GM12878 (cell line): ENCODE measurements at regions of chr15 and their contacts with region 1.

Region 1: DNA sequence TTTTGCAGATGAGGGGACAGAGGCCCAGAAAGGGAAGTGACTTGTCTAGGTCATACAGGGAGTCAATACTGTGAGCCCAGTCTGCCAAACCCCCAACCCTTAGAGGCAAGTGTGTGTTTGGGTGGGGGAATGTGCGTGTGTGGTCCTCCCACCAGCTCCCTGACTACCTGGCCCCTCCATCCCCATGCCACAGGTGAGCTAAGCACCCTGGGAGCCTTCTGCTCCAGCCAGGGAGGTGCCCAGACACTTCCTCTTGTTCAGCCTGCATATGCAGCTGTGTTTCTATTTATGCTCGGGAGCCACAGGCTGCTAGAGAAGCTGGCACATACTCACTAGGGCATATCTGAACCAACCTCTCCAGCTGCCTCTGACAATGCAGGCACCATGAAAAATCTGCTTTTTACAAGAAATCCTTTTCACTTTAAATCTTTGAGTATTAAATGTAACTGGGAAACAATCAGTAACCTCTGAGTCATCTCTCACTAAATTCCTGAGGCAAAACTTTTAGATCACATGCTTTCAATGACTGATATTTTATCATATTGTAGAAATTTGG is 20.7 kb downstream of the TBC1D2B start:
- DNase-seq: no peak
- ATAC-seq: peak; percentile 78
- H3K4me3 ChIP-seq: no peak overlapping the region
- H3K27ac ChIP-seq: peak overlapping the region; percentile 57
- H3K4me1 ChIP-seq: peaks cover 63% of the 10 kb centered on the region
- H3K27me3 ChIP-seq: no peaks in the 10 kb centered on the region
- CTCF ChIP-seq: no peak
- EP300 ChIP-seq: no peak
- POLR2A ChIP-seq: no peak
- RAD21 ChIP-seq: no peak

Region 2: DNA sequence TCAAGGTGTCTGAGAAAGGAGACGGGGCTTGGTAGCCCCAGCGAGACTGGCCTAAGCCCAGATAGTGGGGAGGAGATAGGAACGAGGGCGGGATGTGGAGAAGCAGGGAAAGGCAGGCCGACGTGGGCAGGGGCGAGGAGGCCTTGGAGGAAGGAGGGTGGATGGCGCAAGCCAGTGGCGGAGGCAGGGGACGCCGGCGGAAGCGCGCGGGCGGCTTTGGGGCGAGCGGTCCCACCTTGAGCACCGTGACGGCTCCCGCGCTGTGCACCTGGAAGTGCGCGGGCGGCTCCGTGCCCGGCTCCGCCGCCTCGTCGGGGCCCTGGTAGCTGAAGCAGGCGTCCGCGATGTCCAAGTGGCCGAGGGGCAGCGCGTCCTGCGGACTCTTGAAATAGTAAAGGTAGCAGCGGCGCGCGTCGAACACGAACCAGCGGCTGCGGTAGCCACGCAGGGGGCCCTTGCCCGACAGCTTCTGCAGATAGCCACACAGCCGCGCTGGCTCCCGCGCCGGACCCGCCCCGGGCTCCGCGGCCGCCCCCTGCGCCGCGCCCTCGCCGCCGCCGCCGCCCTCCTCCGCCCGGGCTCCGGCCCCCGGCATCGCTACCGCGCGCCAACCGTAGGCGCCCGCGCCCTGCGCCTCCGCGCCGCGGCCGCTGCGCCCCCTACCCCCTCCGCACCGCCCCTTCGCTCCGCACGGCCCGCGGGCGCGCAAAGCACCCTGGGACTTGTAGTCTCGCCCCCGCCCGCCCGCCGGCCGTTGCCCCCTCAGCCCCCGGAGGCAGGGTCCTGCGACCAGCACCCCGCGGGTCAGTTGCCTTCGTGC is 20.5 kb after region 1 on chr15 and contains the start of gene TBC1D2B:
- CTCF ChIA-PET with region 1: interaction called, 158 read pairs
- POLR2A ChIA-PET with region 1: interaction called, 9 read pairs
- RAD21 ChIA-PET with region 1: interaction called, 170 read pairs
- SMC1A ChIA-PET with region 1: interaction called, 305 read pairs
- in situ Hi-C with region 1: no loop called
- intact Hi-C with region 1: no loop called
- DNase-seq: no peak
- ATAC-seq: peak; percentile 81
- H3K4me3 ChIP-seq: peak within 1 kb of the TSS; percentile 99
- H3K27ac ChIP-seq: peak within 1 kb of the TSS; percentile 62
- H3K4me1 ChIP-seq: peaks cover 10% of the 10 kb centered on the region
- H3K27me3 ChIP-seq: no peaks in the 10 kb centered on the region
- CTCF ChIP-seq: no peak; a peak in 1 of 6 replicates
- EP300 ChIP-seq: no peak
- POLR2A ChIP-seq: no peak
- RAD21 ChIP-seq: no peak
- polyA plus RNA-seq, gene TBC1D2B: 1.3 to 1.4 TPM

Region 3: GRCh38 chr15:78155355-78155939 is 98.7 kb after region 1 on chr15:
- CTCF ChIA-PET with region 1: no interaction called
- POLR2A ChIA-PET with region 1: no interaction called
- RAD21 ChIA-PET with region 1: no interaction called
- SMC1A ChIA-PET with region 1: no interaction called
- in situ Hi-C with region 1: no loop called
- intact Hi-C with region 1: no loop called
- DNase-seq: no peak
- ATAC-seq: no peak
- H3K4me3 ChIP-seq: no peak overlapping the region
- H3K27ac ChIP-seq: no peak overlapping the region
- H3K4me1 ChIP-seq: peaks cover 6% of the 10 kb centered on the region
- H3K27me3 ChIP-seq: no peaks in the 10 kb centered on the region
- CTCF ChIP-seq: no peak
- EP300 ChIP-seq: no peak
- POLR2A ChIP-seq: no peak
- RAD21 ChIP-seq: no peak

Region 4: DNA sequence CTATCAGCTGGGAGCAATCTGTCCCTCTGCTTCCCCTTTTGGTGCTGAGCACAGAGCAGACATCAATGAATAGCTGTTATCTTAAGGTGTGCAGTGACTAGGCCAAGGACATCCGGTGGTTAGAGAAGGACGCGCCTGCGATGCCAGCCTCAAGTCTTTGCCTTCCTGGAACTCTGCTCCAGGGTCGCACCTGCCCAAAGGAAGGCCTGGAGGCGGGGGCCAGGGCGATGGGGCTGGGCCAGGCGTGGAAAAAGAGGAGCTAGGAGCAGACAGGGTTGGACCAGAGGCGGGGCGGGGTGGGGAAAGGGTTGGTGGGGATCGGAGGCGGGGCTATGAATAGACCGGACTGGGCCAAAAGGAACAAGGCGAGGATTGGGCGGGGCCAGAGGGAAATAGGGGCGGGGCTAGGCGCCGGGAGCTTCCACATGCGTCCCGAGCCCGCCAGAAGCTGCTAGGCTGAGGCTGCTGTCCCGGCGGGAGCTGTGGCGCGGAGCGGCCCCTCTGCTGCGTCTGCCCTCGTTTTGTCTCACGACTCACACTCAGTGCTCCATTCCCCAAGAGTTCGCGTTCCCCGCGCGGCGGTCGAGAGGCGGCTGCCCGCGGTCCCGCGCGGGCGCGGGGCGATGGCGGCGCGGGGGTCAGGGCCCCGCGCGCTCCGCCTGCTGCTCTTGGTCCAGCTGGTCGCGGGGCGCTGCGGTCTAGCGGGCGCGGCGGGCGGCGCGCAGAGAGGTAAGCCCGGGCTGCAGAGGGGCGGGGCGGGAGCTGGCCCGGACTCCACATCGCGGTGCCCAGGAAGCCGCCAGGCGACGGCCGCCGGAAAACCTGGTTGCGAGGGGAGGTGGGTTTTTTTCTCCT is 508.5 kb after region 1 on chr15 and contains the start of gene CHRNA5:
- CTCF ChIA-PET with region 1: no interaction called
- POLR2A ChIA-PET with region 1: no interaction called
- RAD21 ChIA-PET with region 1: no interaction called
- SMC1A ChIA-PET with region 1: no interaction called
- in situ Hi-C with region 1: no loop called
- intact Hi-C with region 1: no loop called
- DNase-seq: peak; percentile 63
- ATAC-seq: peak; percentile 94
- H3K4me3 ChIP-seq: peak within 1 kb of the TSS; percentile 83
- H3K27ac ChIP-seq: peak within 1 kb of the TSS; percentile 62
- H3K4me1 ChIP-seq: peaks cover 5% of the 10 kb centered on the region
- H3K27me3 ChIP-seq: no peaks in the 10 kb centered on the region
- CTCF ChIP-seq: no peak
- EP300 ChIP-seq: no peak
- POLR2A ChIP-seq: peak; percentile 80
- RAD21 ChIP-seq: no peak
- polyA plus RNA-seq, gene CHRNA5: 2.6 to 6.1 TPM